Activated CD8-positive, alpha-beta T cell treated with anti-CD3 and anti-CD28 coated beads for 36 hours (primary cell): ENCODE measurements at regions of chr10 and their contacts with region 1.

Region 1: GRCh38 chr10:132458593-132459300 is 61.7 kb downstream of the PWWP2B start:
- DNase-seq: peak; percentile 69
- ATAC-seq: peak; percentile 87
- H3K4me3 Mint-ChIP-seq: no peak overlapping the region
- H3K27ac Mint-ChIP-seq: no peak overlapping the region
- H3K4me1 Mint-ChIP-seq: no peaks in the 10 kb centered on the region
- H3K27me3 Mint-ChIP-seq: no peaks in the 10 kb centered on the region
- CTCF ChIP-seq: peak; percentile 94

Region 2: DNA sequence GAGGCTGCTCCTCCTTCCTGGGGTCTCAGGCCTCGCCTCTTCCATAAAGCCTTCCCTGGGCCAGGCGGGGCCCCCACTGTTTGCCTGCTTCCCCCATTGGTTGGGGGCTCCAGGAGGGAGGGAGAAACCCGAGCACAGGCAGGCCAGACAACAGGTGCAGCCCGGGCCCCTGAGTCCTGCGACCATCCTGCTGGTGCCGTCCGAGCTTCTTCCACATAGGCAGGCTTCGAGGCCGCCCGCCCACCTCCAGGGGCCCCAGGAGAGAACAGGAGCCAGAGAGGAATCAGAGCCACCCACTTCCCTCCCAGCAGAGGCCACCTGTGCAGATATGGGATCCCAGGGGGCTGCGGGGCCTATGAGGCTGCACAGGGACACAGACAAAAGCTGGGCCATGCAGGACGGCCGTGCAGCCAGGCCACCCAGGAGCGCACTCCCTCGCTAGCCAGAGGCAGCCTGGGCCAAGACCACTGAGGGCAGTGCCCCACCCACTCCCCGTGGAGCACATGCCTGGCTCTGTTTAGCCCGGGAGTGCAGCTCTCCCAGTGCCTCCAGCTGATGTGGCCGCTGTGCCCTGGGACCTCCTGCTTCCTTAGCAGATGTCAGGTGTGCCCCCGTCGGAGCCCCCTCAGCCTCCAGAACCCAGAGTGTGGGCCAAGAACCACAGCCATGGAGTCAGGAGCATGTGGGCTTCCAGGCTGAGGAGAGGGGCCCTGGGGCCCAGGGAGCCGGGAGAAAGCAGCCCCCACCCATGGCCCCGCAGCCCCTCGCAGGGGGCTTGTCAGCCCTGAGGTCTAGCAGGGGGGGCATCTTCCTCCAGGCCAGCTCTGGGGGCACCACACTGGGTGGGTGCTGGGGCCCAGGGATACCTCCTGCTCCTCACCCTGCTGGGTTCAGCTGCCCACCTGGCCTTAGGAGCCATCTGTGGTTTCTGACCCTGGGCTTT is 18.9 kb after region 1 on chr10:
- CTCF ChIA-PET with region 1: no interaction called
- POLR2A ChIA-PET with region 1: no interaction called
- intact Hi-C with region 1: no loop called
- DNase-seq: no peak
- ATAC-seq: no peak
- H3K4me3 Mint-ChIP-seq: no peak overlapping the region
- H3K27ac Mint-ChIP-seq: no peak overlapping the region
- H3K4me1 Mint-ChIP-seq: no peaks in the 10 kb centered on the region
- H3K27me3 Mint-ChIP-seq: peaks cover 7% of the 10 kb centered on the region
- CTCF ChIP-seq: no peak

Region 3: GRCh38 chr10:132551093-132551807 is 92.5 kb after region 1 on chr10:
- CTCF ChIA-PET with region 1: interaction called, 12 read pairs
- POLR2A ChIA-PET with region 1: no interaction called
- intact Hi-C with region 1: no loop called
- DNase-seq: peak; percentile 74
- ATAC-seq: peak; percentile 68
- H3K4me3 Mint-ChIP-seq: peak overlapping the region; percentile 68
- H3K27ac Mint-ChIP-seq: peak overlapping the region; percentile 89
- H3K4me1 Mint-ChIP-seq: peaks cover 39% of the 10 kb centered on the region
- H3K27me3 Mint-ChIP-seq: no peaks in the 10 kb centered on the region
- CTCF ChIP-seq: peak; percentile 24

Region 4: GRCh38 chr10:132637477-132638129 is 178.9 kb after region 1 on chr10:
- CTCF ChIA-PET with region 1: interaction called, 16 read pairs
- POLR2A ChIA-PET with region 1: interaction called, 3 read pairs
- intact Hi-C with region 1: loop called (anchors 2 kb)
- DNase-seq: peak; percentile 29
- ATAC-seq: peak; percentile 80
- H3K4me3 Mint-ChIP-seq: no peak overlapping the region
- H3K27ac Mint-ChIP-seq: no peak overlapping the region
- H3K4me1 Mint-ChIP-seq: peaks cover 23% of the 10 kb centered on the region
- H3K27me3 Mint-ChIP-seq: no peaks in the 10 kb centered on the region
- CTCF ChIP-seq: peak; percentile 75

Region 5: GRCh38 chr10:132654702-132655661 is 196.2 kb after region 1 on chr10:
- CTCF ChIA-PET with region 1: interaction called, 11 read pairs
- POLR2A ChIA-PET with region 1: no interaction called
- intact Hi-C with region 1: no loop called
- DNase-seq: peak; percentile 73
- ATAC-seq: peak; percentile 84
- H3K4me3 Mint-ChIP-seq: no peak overlapping the region
- H3K27ac Mint-ChIP-seq: no peak overlapping the region
- H3K4me1 Mint-ChIP-seq: no peaks in the 10 kb centered on the region
- H3K27me3 Mint-ChIP-seq: no peaks in the 10 kb centered on the region
- CTCF ChIP-seq: peak; percentile 94